Dorsolateral prefrontal cortex (tissue), 120 donors: ENCODE measurements at regions of chr15 and their contacts with region 1.

Region 1: GRCh38 chr15:77419836-77420609 is at the start of gene PEAK1:
- DNase-seq: peak; percentile 95 to 100 (median 98)
- H3K4me3 ChIP-seq: peak within 1 kb of the TSS; percentile 60 to 97 (median 89)
- H3K27ac ChIP-seq: peak within 1 kb of the TSS; percentile 86 to 99 (median 96)
- H3K27me3 ChIP-seq: no peaks in the 10 kb centered on the region
- CTCF ChIP-seq: peak in 5 of 56 donors; percentile 2 to 11 (median 5)
- total RNA-seq, gene PEAK1: 66.5 to 124 (median 92.9) TPM

Region 2: DNA sequence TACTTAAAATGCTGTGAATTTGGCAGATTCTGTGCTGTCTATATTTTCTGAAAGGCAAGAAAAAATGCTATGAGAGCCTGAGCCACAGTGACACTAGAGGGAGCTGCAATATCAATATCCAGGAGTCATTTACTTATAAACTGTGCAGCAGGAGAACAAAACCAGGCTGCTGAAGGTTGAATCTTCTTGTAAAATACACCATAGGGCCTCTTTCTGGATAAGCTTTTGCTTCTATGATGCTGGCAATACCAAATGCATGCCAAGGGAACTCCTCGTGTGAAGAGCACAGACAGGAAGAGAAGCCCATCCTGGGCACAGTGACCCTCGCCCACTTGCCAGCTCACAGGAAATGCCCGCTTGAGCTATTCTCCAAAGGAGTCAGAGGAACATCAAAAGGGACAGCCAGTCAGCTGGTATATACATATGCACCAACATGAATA is 301.1 kb before region 1 on chr15:
- intact Hi-C with region 1: loop called in 1 of 2 experiments (anchors 10 kb)
- DNase-seq: peak in 2 of 10 donors; percentile 40 to 73
- H3K4me3 ChIP-seq: no peak overlapping the region
- H3K27ac ChIP-seq: peak overlapping the region in 26 of 59 donors; percentile 2 to 71 (median 38)
- H3K27me3 ChIP-seq: no peaks in the 10 kb centered on the region
- CTCF ChIP-seq: peak; percentile 54 to 93 (median 78)

Region 3: GRCh38 chr15:77192451-77192850 is 227.6 kb before region 1 on chr15:
- intact Hi-C with region 1: loop called in 1 of 2 experiments (anchors 5 kb)
- DNase-seq: no peak
- H3K4me3 ChIP-seq: no peak overlapping the region
- H3K27ac ChIP-seq: no peak overlapping the region
- H3K27me3 ChIP-seq: no peaks in the 10 kb centered on the region
- CTCF ChIP-seq: no peak

Region 4: GRCh38 chr15:77352887-77353286 is 67.1 kb before region 1 on chr15:
- intact Hi-C with region 1: loop called in 1 of 2 experiments (anchors 10 kb)
- DNase-seq: no peak
- H3K4me3 ChIP-seq: no peak overlapping the region
- H3K27ac ChIP-seq: peak overlapping the region in 3 of 59 donors; percentile 1 to 53 (median 3)
- H3K27me3 ChIP-seq: no peaks in the 10 kb centered on the region
- CTCF ChIP-seq: no peak

Region 5: DNA sequence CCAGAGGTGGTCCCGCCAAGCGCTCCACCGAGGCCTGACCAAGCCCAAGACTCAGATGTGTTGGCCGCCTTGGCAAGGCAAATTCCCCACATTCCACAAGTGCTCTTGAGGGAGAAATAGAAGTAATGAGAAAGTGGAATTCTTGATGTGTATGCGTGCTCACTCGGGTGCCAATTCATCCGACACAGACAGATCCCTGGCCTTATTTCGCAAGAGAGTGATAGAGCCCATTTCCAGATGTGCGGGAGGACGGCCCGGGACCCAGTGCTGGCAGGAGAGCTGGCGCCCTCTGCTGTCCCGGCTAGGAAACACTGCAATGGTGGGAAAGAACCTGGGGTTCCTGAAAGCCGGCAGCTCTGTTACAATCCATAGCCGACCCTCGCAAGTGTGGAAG is 76.7 kb after region 1 on chr15:
- intact Hi-C with region 1: loop called (anchors 1 to 2 kb)
- DNase-seq: peak; percentile 40 to 84 (median 80)
- H3K4me3 ChIP-seq: peak overlapping the region in 50 of 59 donors; percentile 6 to 60 (median 33)
- H3K27ac ChIP-seq: peak overlapping the region; percentile 88 to 100 (median 99)
- H3K27me3 ChIP-seq: no peaks in the 10 kb centered on the region
- CTCF ChIP-seq: peak; percentile 70 to 96 (median 88)

Region 6: DNA sequence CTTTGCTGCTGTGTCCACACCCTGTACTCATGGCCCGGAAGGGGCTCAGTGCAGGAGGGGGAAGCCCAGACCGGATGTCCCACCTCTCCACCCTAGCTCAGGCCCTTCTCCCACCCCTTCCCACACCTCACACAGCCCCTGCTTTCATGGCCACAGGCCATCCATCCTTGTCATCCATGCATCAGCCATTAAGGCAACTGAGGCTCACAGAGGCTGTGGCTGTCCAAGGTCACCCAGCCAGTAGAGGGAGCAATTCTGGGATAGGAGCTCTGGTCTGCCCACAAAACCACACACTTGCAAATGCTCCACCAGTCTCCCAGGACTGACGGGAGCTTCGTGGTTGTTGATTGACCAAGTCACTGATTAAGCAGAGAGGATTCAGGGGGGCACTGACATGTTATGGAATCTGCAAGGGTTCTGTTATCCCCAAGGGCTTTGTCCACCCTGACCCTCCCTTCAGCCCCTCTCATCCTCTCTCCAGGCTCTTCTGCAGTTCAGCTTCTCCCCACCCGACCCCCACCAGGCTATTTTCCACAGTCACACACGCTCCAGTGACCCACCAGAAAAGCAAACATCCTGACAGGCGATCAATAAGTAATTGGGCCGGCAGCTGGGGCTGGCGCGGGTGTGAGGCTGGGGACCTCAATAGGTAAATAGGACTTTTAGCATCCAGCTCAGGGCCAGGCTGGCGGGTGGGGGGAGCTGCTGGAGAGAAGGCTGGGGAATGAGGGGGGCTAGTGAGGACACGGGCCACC is 197.6 kb after region 1 on chr15:
- intact Hi-C with region 1: loop called in 1 of 2 experiments (anchors 10 kb)
- DNase-seq: no peak
- H3K4me3 ChIP-seq: no peak overlapping the region
- H3K27ac ChIP-seq: peak overlapping the region in 39 of 59 donors; percentile 1 to 78 (median 38)
- H3K27me3 ChIP-seq: no peaks in the 10 kb centered on the region
- CTCF ChIP-seq: peak in 46 of 56 donors; percentile 13 to 50 (median 35)